ENCODE measurements at regions of chr3 and their contacts with region 1.

Region 1: DNA sequence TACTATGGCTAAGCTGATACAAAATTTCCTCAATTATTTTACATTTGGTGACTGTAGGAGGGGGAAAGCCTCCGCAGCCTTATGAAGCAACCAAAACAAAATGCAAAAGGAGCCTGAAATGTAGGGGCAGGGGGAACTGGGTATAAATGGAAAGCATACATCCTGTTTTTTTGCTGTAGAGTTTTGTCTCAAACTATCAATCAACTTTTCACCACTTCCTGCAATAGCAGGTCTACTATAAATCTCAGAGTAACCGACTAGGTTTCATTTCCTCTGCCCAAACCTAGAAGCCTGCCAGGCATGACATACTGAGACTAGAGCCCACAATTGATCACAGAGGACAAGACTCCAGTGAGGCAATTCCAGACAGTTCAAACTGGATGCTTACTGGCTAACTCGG is 91.3 kb downstream of the SHQ1 start:
- DNase-seq: peak in 8 of 9 experiments; percentile 10 to 80 (median 52)
- ATAC-seq: peak; percentile 97
- H3K4me3 ChIP-seq: peak overlapping the region in 1 of 2 experiments; percentile 38
- H3K4me3 Mint-ChIP-seq: peak overlapping the region; percentile 60
- H3K27ac ChIP-seq: peak overlapping the region; percentile 51 to 52
- H3K27ac Mint-ChIP-seq: peak overlapping the region; percentile 93
- H3K4me1 ChIP-seq: peaks cover 44% of the 10 kb centered on the region
- H3K4me1 Mint-ChIP-seq: peaks cover 59% of the 10 kb centered on the region
- H3K27me3 ChIP-seq: no peaks in the 10 kb centered on the region
- H3K27me3 Mint-ChIP-seq: no peaks in the 10 kb centered on the region
- CTCF ChIP-seq: no peak

Region 2: DNA sequence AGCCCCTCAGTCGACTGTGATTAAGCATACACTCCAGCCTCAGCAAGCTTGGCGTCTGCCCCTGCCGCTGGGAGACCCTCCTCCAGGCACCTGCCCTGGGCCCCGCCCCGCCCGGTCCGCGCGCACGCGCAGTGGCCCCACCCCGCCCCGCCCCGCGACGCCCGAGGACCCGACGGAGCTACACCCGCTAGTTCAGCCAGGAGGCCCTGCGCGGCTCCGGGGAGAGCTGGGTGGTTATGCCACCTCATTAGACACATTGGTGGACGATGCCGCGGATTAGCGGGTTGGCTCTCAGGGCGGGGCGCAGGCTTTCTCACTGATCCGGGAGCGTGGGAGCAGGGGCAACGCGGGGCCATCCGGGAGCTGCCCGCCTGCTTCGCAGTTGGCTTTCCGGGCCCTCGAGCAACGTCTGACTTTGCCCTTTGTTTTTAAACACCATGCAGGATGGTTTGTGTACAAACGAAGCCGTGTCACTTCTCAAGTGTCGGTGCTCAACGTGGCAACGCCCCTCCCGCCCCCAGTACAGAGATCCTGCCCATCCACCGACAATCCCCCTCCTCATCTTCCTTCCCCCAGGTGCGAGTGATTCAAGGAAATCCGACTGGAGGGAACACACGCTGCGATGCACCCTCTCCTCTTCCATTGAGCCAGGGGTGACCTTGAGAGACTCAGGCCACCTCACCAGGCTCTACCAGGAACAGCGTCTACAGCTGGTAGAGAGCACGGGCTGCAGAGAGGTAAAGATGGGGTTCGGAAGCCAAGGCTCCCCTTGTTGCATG is 18.0 kb before region 1 on chr3:
- CTCF ChIA-PET with region 1: interaction called, 10 read pairs
- POLR2A ChIA-PET with region 1: interaction called, 23 read pairs
- intact Hi-C with region 1: loop called (anchors 1 to 2 kb)
- DNase-seq: peak; percentile 50 to 85 (median 73)
- ATAC-seq: peak; percentile 92
- H3K4me3 ChIP-seq: peak overlapping the region; percentile 56 to 67
- H3K4me3 Mint-ChIP-seq: peak overlapping the region; percentile 89
- H3K27ac ChIP-seq: peak overlapping the region; percentile 69 to 73
- H3K27ac Mint-ChIP-seq: peak overlapping the region; percentile 97
- H3K4me1 ChIP-seq: peaks cover 19% of the 10 kb centered on the region
- H3K4me1 Mint-ChIP-seq: peaks cover 31% of the 10 kb centered on the region
- H3K27me3 ChIP-seq: no peaks in the 10 kb centered on the region
- H3K27me3 Mint-ChIP-seq: no peaks in the 10 kb centered on the region
- CTCF ChIP-seq: no peak

Region 3: DNA sequence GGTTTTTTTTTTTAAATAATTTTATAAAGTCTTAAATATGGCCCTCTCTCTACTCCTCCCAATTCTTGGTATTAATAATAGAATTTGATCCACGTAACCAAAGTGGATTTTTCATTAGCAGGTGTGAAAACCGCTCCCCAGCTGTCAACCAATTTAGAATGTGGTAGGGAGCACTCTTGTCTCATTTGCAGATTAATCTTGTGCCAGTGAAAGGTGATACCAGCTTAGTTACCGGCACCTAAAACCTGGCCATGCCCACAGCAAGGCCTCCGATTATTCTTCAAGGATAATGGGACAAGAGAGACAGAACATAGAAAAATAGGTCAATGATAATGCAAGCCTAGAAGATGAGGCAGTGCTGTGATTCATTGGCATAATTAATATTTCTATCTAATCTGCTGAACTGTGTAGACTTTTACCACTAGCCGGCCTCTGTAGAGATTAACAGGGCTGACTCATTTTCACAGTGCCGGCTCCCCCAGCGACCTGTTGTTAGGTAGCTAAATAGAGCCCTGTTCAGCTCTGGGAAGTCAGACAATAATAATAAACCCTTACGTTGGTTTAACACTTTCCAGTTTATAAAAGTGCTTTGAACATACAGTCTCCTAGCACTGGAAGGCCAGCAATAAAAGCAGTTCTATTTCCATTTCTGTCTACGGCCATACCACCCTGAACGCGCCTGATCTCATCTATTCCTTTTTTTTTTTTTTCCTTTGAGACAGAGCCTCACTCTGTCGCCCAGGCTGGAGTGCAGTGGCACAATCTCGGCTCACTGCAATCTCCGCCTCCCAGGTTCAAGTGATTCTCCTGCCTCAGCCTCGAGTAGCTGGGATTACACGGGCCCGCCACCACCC is 11.5 kb before region 1 on chr3:
- CTCF ChIA-PET with region 1: interaction called, 10 read pairs
- POLR2A ChIA-PET with region 1: interaction called, 5 read pairs
- intact Hi-C with region 1: no loop called
- DNase-seq: no peak
- ATAC-seq: no peak
- H3K4me3 ChIP-seq: no peak overlapping the region
- H3K4me3 Mint-ChIP-seq: no peak overlapping the region
- H3K27ac ChIP-seq: no peak overlapping the region
- H3K27ac Mint-ChIP-seq: no peak overlapping the region
- H3K4me1 ChIP-seq: peaks cover 28% of the 10 kb centered on the region
- H3K4me1 Mint-ChIP-seq: peaks cover 36% of the 10 kb centered on the region
- H3K27me3 ChIP-seq: no peaks in the 10 kb centered on the region
- H3K27me3 Mint-ChIP-seq: no peaks in the 10 kb centered on the region
- CTCF ChIP-seq: no peak